Aorta (tissue), 5 donors: ENCODE measurements at regions of chr3 and their contacts with region 1.

Region 1: GRCh38 chr3:52056968-52057805 is 816 bp upstream of the DUSP7 start:
- DNase-seq: peak; percentile 100
- ATAC-seq: peak; percentile 94
- H3K4me3 ChIP-seq: peak overlapping the region; percentile 27 to 71
- H3K27ac ChIP-seq: peak overlapping the region in 1 of 2 donors; percentile 73
- H3K4me1 ChIP-seq: no peaks in the 10 kb centered on the region
- H3K27me3 ChIP-seq: no peaks in the 10 kb centered on the region

Region 2: DNA sequence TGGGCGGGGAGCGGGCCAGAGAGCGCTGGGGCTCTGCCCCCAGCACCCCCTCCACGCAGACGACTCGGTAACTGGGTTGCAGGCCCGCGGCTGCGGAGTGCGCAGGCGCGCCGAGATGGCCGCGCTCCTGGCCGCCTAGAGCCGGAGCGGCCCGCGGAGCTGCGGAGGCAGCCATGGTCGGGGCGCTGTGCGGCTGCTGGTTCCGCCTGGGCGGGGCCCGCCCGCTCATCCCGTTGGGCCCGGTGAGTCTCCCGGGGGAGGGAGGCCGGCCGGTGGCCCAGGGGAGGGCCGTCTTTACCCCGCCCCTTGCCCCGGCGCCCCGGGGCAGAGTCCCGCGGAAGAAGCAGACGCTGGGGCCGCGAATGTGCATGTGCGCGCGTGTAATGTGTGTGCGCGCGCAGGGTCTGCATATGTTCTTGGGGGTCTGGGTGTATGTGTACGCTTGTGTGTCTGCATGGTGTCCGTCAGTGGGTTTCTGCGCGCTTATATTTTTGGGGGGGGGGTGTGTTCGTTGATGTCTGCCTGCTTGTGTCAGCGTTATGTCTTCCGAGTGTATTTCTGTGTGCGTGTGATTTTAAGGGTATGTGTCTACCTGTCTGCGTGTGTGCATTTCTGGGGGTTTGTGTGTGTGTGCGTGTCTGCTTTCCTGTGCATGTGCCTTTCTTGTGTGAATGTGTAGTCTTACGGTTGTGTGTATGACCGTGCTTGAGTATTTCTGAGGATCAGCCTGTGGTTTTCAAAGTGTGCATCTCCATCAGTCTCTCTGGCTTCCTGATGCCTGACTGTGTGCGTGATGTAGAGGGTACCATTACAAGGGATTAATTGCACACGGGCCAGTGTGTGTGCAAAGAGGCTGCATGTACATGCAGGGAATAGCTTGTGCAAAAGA is 82.0 kb before region 1 on chr3 and contains the start of gene ABHD14A:
- intact Hi-C with region 1: no loop called
- DNase-seq: peak; percentile 79 to 90
- ATAC-seq: peak; percentile 87
- H3K4me3 ChIP-seq: peak within 1 kb of the TSS; percentile 44 to 60
- H3K27ac ChIP-seq: peak within 1 kb of the TSS in 1 of 2 donors; percentile 41
- H3K4me1 ChIP-seq: no peaks in the 10 kb centered on the region
- H3K27me3 ChIP-seq: no peaks in the 10 kb centered on the region
- total RNA-seq, gene ABHD14A: 4.7 to 16.0 TPM

Region 3: GRCh38 chr3:52001443-52001974 is 55.7 kb before region 1 on chr3:
- intact Hi-C with region 1: loop called (anchors 1 kb)
- DNase-seq: peak; percentile 78 to 93
- ATAC-seq: peak; percentile 79
- H3K4me3 ChIP-seq: no peak overlapping the region
- H3K27ac ChIP-seq: no peak overlapping the region
- H3K4me1 ChIP-seq: no peaks in the 10 kb centered on the region
- H3K27me3 ChIP-seq: no peaks in the 10 kb centered on the region

Region 4: DNA sequence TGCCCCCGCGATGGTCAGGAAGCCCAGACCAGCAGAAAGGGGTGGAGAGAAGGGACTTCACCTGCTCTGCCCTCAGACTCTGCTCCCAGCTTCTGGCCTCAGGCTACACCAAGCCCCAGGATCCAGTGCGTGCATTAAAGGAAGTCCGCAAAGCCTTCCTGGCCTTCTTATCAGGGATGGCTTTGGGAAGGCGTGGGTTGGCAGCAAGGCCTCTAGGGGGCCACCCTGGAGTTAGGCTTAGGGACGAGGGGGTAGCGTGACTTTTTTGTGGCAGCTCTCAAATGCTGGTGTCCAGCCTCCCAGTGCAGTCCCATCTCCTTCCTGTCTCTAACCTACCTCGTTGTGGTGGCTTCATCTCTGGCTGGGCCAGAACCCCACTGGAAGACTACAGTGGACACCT is 42.6 kb before region 1 on chr3:
- intact Hi-C with region 1: loop called in 1 of 2 experiments (anchors 5 kb)
- DNase-seq: no peak
- ATAC-seq: no peak
- H3K4me3 ChIP-seq: no peak overlapping the region
- H3K27ac ChIP-seq: no peak overlapping the region
- H3K4me1 ChIP-seq: no peaks in the 10 kb centered on the region
- H3K27me3 ChIP-seq: no peaks in the 10 kb centered on the region

Region 5: DNA sequence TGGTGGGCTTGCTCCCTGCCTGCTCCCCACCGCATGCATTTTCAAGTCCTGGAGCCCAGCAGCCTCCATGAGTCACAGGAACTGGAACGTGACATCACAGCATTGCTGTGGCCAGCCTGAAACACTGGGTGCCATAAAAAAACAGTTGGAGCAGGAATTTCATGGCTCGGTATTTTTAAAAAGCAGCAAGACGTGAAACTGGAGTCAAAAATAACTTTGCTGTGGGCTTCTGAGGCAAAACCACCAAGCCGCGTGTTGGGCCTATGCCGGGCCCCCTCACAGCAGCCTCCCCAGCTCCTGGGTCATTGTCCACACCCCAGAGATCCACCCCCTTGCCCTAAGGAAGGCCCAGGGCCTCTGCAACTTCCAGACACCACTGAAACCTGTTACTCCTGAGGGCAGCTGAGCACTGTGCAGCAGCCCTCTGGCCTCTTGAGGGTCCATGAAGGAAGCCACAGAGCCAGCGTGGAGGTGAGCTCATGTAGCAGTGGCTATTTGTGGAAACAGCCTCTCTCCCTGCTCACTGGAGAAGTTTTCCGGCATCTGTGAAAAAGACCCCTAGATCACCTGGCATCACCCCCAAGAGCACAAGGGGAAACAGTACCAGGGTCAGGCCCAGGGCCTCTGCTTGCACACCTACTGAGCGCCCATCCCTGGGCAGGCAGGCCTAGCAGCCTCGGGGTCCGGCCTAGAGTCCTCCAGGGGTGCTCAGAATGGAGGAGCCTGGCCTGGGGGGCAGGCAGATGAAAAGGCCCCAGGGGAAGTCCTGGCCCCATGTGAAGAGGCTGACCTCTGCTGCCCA is 33.1 kb after region 1 on chr3:
- intact Hi-C with region 1: loop called in 1 of 2 experiments (anchors 1 kb)
- DNase-seq: peak; percentile 84 to 88
- ATAC-seq: peak; percentile 79
- H3K4me3 ChIP-seq: no peak overlapping the region
- H3K27ac ChIP-seq: peak overlapping the region; percentile 96 to 100
- H3K4me1 ChIP-seq: peaks cover 0 to 3% of the 10 kb centered on the region in 2 donors
- H3K27me3 ChIP-seq: no peaks in the 10 kb centered on the region

Region 6: GRCh38 chr3:52123106-52123725 is 66.0 kb after region 1 on chr3:
- intact Hi-C with region 1: loop called (anchors 2 kb)
- DNase-seq: peak; percentile 82 to 93
- ATAC-seq: peak; percentile 87
- H3K4me3 ChIP-seq: no peak overlapping the region
- H3K27ac ChIP-seq: no peak overlapping the region
- H3K4me1 ChIP-seq: no peaks in the 10 kb centered on the region
- H3K27me3 ChIP-seq: no peaks in the 10 kb centered on the region

Region 7: GRCh38 chr3:52136513-52136912 is 79.3 kb after region 1 on chr3:
- intact Hi-C with region 1: loop called (anchors 5 kb)
- DNase-seq: no peak
- ATAC-seq: no peak
- H3K4me3 ChIP-seq: no peak overlapping the region
- H3K27ac ChIP-seq: no peak overlapping the region
- H3K4me1 ChIP-seq: no peaks in the 10 kb centered on the region
- H3K27me3 ChIP-seq: no peaks in the 10 kb centered on the region

Region 8: GRCh38 chr3:52144034-52144795 is 87.0 kb after region 1 on chr3:
- intact Hi-C with region 1: loop called (anchors 5 kb)
- DNase-seq: peak; percentile 90 to 93
- ATAC-seq: peak; percentile 89
- H3K4me3 ChIP-seq: no peak overlapping the region
- H3K27ac ChIP-seq: no peak overlapping the region
- H3K4me1 ChIP-seq: no peaks in the 10 kb centered on the region
- H3K27me3 ChIP-seq: no peaks in the 10 kb centered on the region